B cell (primary cell): ENCODE measurements at regions of chr2 and their contacts with region 1.

Region 1: GRCh38 chr2:38508311-38509039 is 94.3 kb downstream of the HNRNPLL start:
- DNase-seq: peak; percentile 83
- ATAC-seq: peak; percentile 86
- H3K4me3 ChIP-seq: no peak overlapping the region
- H3K4me3 Mint-ChIP-seq: no peak overlapping the region
- H3K27ac ChIP-seq: no peak overlapping the region
- H3K27ac Mint-ChIP-seq: no peak overlapping the region
- H3K4me1 ChIP-seq: no peaks in the 10 kb centered on the region
- H3K4me1 Mint-ChIP-seq: peaks cover 5% of the 10 kb centered on the region
- H3K27me3 ChIP-seq: peaks cover 0 to 5% (median 0%) of the 10 kb centered on the region in 4 experiments
- H3K27me3 Mint-ChIP-seq: no peaks in the 10 kb centered on the region
- CTCF ChIP-seq: peak; percentile 89

Region 2: GRCh38 chr2:37982147-37982582 is 526.3 kb before region 1 on chr2:
- CTCF ChIA-PET with region 1: interaction called, 11 read pairs
- POLR2A ChIA-PET with region 1: no interaction called
- intact Hi-C with region 1: no loop called
- DNase-seq: peak; percentile 79
- ATAC-seq: peak; percentile 49
- H3K4me3 ChIP-seq: peak overlapping the region in 3 of 5 experiments; percentile 2 to 34 (median 8)
- H3K4me3 Mint-ChIP-seq: peak overlapping the region; percentile 64
- H3K27ac ChIP-seq: no peak overlapping the region
- H3K27ac Mint-ChIP-seq: no peak overlapping the region
- H3K4me1 ChIP-seq: peaks cover 6% of the 10 kb centered on the region in 2 donors
- H3K4me1 Mint-ChIP-seq: peaks cover 6% of the 10 kb centered on the region
- H3K27me3 ChIP-seq: no peaks in the 10 kb centered on the region
- H3K27me3 Mint-ChIP-seq: no peaks in the 10 kb centered on the region
- CTCF ChIP-seq: peak; percentile 94

Region 3: DNA sequence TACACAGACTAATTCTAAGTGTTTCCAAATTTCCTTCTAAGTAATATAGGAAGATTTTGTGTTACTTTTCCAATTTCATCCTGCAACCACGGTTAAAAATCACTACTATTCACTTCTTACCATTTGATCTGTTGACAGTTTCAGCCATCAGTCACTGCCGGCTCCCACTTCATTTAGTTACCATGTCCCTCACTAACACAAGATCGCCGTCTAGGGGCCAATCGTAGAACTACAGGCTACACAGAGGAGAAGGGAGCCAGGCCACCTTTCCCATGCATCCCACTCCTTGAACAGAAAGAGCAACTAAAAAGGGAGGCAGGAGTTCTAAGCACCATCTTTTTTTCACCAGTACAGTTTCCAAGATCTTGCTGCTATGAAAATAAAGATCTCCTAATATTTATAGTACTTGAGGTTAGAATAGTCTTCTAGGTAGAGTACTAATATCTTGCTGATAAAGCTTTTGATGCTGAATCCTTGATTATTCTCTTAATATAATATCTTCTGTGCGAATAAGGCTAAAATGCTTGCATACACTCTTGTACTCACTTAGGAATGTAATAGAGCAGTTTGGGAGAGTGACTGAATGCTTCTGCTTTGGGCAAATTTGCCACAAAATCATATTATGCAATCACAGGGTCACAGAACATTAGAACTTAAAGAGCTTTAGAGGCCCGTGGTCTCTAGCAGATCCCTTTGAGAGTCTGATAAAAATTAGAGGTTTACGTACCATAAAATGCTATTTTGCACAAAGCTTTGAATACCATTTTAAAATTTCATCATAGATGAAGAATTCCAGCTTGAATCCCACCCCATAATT is 393.1 kb before region 1 on chr2:
- CTCF ChIA-PET with region 1: interaction called, 3 read pairs
- POLR2A ChIA-PET with region 1: no interaction called
- intact Hi-C with region 1: loop called (anchors 5 kb)
- DNase-seq: peak; percentile 66
- ATAC-seq: peak; percentile 47
- H3K4me3 ChIP-seq: no peak overlapping the region
- H3K4me3 Mint-ChIP-seq: no peak overlapping the region
- H3K27ac ChIP-seq: no peak overlapping the region
- H3K27ac Mint-ChIP-seq: no peak overlapping the region
- H3K4me1 ChIP-seq: no peaks in the 10 kb centered on the region
- H3K4me1 Mint-ChIP-seq: no peaks in the 10 kb centered on the region
- H3K27me3 ChIP-seq: no peaks in the 10 kb centered on the region
- H3K27me3 Mint-ChIP-seq: peaks cover 29% of the 10 kb centered on the region
- CTCF ChIP-seq: peak; percentile 98

Region 4: DNA sequence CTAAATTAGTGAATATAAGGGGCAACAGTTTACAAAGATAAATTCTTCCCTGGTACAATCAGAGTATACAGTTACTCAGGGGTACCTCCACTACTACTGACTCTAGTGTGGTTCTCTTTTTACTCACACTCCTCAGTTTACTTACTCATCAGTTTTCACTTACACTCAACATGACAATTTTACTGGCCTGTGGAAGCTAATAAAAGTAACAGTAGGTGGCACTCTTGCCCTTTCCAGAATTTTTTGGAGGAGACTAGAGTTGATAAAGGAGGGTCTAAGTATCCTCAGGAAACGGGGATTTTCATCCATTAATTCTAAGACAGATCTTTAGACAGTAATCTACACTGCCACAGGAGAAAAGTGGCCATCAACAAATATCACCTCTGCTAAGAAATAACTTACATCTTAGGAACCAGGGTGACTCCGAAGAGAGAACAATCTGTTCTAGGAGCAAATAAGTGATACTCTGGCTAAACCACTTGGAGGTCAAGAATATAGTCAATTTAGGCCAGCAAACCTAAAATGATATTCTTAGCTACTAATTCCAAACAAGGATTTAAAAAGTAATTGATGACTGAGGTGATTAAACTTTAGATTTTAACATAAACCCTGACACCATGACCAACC is 192.7 kb before region 1 on chr2:
- CTCF ChIA-PET with region 1: interaction called, 191 read pairs
- POLR2A ChIA-PET with region 1: no interaction called
- intact Hi-C with region 1: loop called (anchors 1 kb)
- DNase-seq: peak; percentile 61
- ATAC-seq: peak; percentile 47
- H3K4me3 ChIP-seq: no peak overlapping the region
- H3K4me3 Mint-ChIP-seq: no peak overlapping the region
- H3K27ac ChIP-seq: no peak overlapping the region
- H3K27ac Mint-ChIP-seq: no peak overlapping the region
- H3K4me1 ChIP-seq: no peaks in the 10 kb centered on the region
- H3K4me1 Mint-ChIP-seq: no peaks in the 10 kb centered on the region
- H3K27me3 ChIP-seq: no peaks in the 10 kb centered on the region
- H3K27me3 Mint-ChIP-seq: no peaks in the 10 kb centered on the region
- CTCF ChIP-seq: peak; percentile 76

Region 5: DNA sequence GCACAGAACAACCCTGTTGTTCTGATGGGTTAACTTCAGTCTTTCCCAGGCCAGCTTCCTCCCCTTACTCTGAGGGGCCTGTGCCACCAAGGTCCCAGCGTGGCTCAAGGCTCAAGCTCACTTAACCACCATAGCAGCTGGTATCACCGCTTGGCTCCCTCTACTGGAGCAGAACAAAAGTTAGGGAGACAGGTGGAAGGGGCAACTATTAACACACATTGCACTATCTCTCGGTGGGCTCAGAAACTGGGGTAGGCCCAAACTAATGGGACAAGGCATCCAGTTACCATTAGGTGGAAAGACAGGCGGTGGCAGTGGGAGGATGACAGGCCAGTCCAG is 42.7 kb before region 1 on chr2:
- CTCF ChIA-PET with region 1: interaction called, 11 read pairs
- POLR2A ChIA-PET with region 1: no interaction called
- intact Hi-C with region 1: no loop called
- DNase-seq: peak; percentile 30
- ATAC-seq: no peak
- H3K4me3 ChIP-seq: no peak overlapping the region
- H3K4me3 Mint-ChIP-seq: no peak overlapping the region
- H3K27ac ChIP-seq: no peak overlapping the region
- H3K27ac Mint-ChIP-seq: no peak overlapping the region
- H3K4me1 ChIP-seq: no peaks in the 10 kb centered on the region
- H3K4me1 Mint-ChIP-seq: no peaks in the 10 kb centered on the region
- H3K27me3 ChIP-seq: no peaks in the 10 kb centered on the region
- H3K27me3 Mint-ChIP-seq: peaks cover 16% of the 10 kb centered on the region
- CTCF ChIP-seq: peak; percentile 18

Region 6: DNA sequence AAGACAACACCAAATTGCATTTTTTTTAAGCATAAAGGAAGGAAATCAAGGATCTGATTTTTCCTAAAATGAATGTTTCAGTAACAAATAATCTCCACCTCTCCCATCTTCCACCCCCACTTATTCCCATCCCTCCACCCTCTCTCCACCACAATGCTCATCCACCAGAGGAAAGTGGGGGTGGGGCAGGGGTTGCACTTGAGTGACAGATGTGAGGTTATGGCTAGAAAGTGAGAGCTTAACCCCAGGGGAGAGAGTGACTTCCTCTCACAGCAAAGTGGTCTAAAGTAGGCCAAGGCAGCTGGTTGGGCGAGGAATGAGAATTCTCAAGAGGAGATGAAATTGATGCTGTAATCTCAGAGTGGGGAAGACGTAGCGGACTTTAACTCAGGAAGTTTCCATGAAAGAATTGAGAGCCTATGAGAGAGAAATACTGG is 10.4 kb before region 1 on chr2:
- CTCF ChIA-PET with region 1: interaction called, 53 read pairs
- POLR2A ChIA-PET with region 1: no interaction called
- intact Hi-C with region 1: no loop called
- DNase-seq: peak; percentile 62
- ATAC-seq: peak; percentile 95
- H3K4me3 ChIP-seq: peak overlapping the region in 1 of 5 experiments; percentile 3
- H3K4me3 Mint-ChIP-seq: peak overlapping the region; percentile 48
- H3K27ac ChIP-seq: peak overlapping the region in 1 of 2 donors; percentile 49
- H3K27ac Mint-ChIP-seq: peak overlapping the region; percentile 67
- H3K4me1 ChIP-seq: peaks cover 10 to 21% of the 10 kb centered on the region in 2 donors
- H3K4me1 Mint-ChIP-seq: peaks cover 15% of the 10 kb centered on the region
- H3K27me3 ChIP-seq: peaks cover 0 to 4% (median 0%) of the 10 kb centered on the region in 4 experiments
- H3K27me3 Mint-ChIP-seq: peaks cover 9% of the 10 kb centered on the region
- CTCF ChIP-seq: no peak

Region 7: DNA sequence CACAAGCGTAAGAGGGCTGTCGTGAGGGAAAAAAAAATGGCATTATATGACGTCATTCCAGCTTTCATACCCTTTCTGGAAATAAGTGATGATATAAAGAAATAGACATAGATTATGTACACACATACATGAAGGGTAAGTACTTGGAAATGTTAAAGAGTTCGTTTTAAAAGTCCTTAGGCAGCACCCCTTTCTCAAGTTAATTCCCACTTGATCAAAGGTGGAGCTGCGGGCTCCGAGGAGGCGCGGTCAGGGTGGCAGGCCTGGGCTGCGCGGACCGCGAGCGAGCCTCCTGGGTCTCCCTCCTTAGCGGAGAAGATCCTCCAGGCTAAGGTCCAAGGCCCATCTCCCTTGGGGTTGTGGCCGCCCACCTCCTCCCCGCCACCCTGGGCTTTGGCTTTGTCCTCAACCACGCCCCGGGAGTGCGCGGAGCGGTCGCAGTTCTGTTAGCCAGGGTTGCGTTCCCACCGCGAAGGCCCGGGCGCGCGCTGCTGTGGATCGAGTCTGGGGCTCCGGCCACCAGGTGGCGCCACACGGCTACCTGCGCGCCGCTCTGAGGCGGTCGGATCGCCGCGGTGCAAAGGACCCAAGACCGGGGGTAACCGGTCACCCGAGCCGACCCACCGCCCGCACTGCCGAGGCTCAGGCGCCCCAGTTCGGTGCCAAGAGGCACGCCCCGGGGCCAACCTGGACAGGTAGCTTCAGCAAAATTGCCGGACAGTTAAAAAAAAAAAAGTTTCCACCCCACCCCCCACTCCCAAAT is 27.4 kb after region 1 on chr2:
- CTCF ChIA-PET with region 1: interaction called, 26 read pairs
- POLR2A ChIA-PET with region 1: no interaction called
- intact Hi-C with region 1: no loop called
- DNase-seq: peak; percentile 85
- ATAC-seq: peak; percentile 54
- H3K4me3 ChIP-seq: peak overlapping the region in 4 of 5 experiments; percentile 40 to 79 (median 52)
- H3K4me3 Mint-ChIP-seq: peak overlapping the region; percentile 78
- H3K27ac ChIP-seq: no peak overlapping the region
- H3K27ac Mint-ChIP-seq: peak overlapping the region; percentile 37
- H3K4me1 ChIP-seq: peaks cover 28 to 39% of the 10 kb centered on the region in 2 donors
- H3K4me1 Mint-ChIP-seq: peaks cover 34% of the 10 kb centered on the region
- H3K27me3 ChIP-seq: peaks cover 0 to 7% (median 1%) of the 10 kb centered on the region in 4 experiments
- H3K27me3 Mint-ChIP-seq: peaks cover 23% of the 10 kb centered on the region
- CTCF ChIP-seq: peak; percentile 90

Region 8: DNA sequence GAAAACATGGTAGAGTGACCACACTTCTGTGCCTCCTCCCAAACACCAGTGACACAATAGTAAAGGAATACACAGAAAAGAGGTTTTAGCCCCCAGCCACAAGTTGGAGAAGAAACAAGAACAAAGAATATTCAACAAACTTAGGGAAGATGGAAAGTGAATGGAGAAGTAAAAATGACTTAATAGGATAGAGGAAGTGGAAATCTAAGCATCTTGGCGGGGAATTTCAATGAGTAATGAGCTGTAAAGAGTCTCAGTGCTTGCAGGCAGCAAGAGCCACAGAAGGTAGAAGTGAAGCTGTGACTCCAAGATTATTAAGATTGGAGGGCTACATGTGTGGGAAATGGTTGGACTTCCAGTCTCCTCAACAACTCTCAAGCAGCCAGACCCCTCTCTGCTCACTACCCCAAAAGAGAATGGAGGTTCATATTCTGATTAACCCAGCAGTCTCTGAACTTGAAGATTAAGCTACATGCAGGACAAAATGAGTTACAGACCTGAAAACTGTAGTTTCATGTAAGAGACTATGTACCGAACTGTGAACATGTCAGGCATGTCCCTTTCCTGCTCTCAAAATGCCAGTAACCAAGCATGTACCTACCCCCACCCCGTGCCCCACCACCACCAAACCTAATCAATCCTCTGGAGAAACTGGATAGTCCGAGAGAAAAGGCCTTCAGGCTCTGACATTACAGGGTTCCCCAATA is 111.1 kb after region 1 on chr2:
- CTCF ChIA-PET with region 1: no interaction called
- POLR2A ChIA-PET with region 1: no interaction called
- intact Hi-C with region 1: no loop called
- DNase-seq: no peak
- ATAC-seq: no peak
- H3K4me3 ChIP-seq: no peak overlapping the region
- H3K4me3 Mint-ChIP-seq: no peak overlapping the region
- H3K27ac ChIP-seq: no peak overlapping the region
- H3K27ac Mint-ChIP-seq: no peak overlapping the region
- H3K4me1 ChIP-seq: peaks cover 7% of the 10 kb centered on the region in 2 donors
- H3K4me1 Mint-ChIP-seq: peaks cover 6% of the 10 kb centered on the region
- H3K27me3 ChIP-seq: peaks cover 0 to 43% (median 39%) of the 10 kb centered on the region in 4 experiments
- H3K27me3 Mint-ChIP-seq: peaks cover 57% of the 10 kb centered on the region
- CTCF ChIP-seq: no peak

Region 9: DNA sequence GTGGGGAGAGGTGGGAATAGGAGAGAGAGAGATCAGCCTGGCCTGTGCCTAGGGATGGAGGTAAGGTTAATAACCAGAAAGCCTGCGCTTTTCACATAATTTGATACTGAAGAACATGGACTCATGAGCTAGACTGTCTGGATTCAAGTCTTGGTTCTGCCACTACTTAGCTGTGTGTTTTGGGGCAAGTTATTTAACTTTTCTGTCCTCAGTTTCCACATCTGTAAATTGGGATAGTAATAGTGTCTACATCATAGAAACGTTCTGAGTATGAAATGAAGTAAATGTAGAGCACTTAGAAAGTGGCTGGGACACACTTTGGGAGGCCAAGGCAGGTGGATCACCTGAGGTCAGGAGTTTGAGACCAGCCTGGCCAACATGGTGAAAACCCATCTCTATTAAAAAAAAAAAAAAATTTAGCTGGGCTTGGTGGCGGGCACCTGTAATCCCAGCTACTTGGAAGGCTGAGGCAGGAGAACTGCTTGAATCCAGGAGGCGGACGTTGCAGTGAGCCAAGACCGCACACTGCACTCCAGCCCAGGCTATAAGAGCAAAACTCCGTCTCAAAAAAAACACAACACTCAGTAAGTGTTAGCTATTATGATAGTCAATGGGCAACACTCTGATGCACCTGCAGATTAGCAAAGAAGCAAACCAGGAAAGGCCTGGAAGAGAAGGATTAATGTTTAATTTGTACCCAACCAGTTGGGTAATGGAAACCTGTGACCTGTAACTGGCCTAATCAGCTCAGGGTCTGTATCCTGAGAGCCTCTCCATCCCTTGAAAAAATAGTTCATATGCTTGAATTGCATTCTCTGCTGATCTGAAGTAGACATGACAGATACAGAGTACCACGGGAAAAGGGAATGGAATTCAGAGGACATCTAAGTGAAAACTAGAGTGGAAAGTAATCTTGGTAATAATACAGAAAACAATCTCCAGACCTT is 164.2 kb after region 1 on chr2:
- CTCF ChIA-PET with region 1: no interaction called
- POLR2A ChIA-PET with region 1: no interaction called
- intact Hi-C with region 1: no loop called
- DNase-seq: no peak
- ATAC-seq: no peak
- H3K4me3 ChIP-seq: no peak overlapping the region
- H3K4me3 Mint-ChIP-seq: no peak overlapping the region
- H3K27ac ChIP-seq: no peak overlapping the region
- H3K27ac Mint-ChIP-seq: no peak overlapping the region
- H3K4me1 ChIP-seq: no peaks in the 10 kb centered on the region
- H3K4me1 Mint-ChIP-seq: peaks cover 2% of the 10 kb centered on the region
- H3K27me3 ChIP-seq: no peaks in the 10 kb centered on the region
- H3K27me3 Mint-ChIP-seq: no peaks in the 10 kb centered on the region
- CTCF ChIP-seq: no peak